ENCODE measurements at regions of chr1 and their contacts with region 1.

Region 1: DNA sequence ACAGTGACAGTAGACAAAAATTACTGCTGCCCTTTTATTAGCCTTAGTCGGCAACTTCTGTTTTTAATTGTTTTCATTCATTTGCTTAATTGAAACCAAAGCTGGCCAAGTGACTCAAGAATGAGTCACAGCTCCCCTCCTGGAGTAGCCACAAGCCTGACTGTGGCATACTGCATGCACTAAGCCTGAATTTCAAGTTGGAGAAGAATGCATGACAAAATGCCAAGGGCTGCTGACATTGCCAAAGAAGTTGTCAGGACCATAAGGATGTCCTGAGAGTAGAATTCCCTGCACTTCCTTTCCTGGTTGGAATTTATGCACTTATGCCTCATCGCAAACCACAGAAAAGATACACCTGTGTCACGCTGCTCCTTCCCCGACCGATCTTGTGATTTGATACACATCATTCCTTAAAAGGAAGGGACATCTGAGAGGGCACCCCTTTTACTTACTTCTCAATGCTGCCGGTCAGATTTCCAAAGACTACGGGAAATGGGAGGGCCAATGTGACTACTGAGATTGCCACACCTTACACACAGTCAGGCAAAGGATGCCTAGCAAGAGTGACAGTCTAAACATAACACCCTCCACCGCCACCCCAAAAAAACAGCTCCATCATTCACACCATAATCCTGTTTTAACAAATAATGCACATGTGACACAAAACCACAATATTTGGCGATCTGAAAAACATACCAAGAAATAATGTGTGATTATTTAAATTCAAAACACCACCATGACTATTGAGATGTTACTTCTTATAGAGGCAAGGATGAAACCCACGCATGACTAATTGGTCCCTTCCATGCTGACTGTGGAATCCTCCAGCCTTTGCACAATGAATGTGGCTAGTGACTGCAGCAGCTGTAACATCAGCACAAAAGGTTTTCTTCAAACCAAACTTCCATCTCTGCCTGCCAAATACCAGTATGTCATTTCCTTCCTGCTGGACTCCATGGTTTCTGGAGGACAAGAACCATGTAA is 28.2 kb downstream of the VAV3 start:
- DNase-seq: peak; percentile 72
- H3K4me3 Mint-ChIP-seq: peak overlapping the region; percentile 49
- H3K27ac Mint-ChIP-seq: peak overlapping the region; percentile 64
- H3K4me1 Mint-ChIP-seq: peaks cover 44% of the 10 kb centered on the region
- H3K27me3 Mint-ChIP-seq: no peaks in the 10 kb centered on the region

Region 2: GRCh38 chr1:107782217-107782845 is 154.5 kb before region 1 on chr1:
- CTCF ChIA-PET with region 1: interaction called, 8 read pairs
- POLR2A ChIA-PET with region 1: no interaction called
- intact Hi-C with region 1: loop called (anchors 1 kb)
- DNase-seq: no peak
- H3K4me3 Mint-ChIP-seq: no peak overlapping the region
- H3K27ac Mint-ChIP-seq: no peak overlapping the region
- H3K4me1 Mint-ChIP-seq: peaks cover 24% of the 10 kb centered on the region
- H3K27me3 Mint-ChIP-seq: no peaks in the 10 kb centered on the region

Region 3: DNA sequence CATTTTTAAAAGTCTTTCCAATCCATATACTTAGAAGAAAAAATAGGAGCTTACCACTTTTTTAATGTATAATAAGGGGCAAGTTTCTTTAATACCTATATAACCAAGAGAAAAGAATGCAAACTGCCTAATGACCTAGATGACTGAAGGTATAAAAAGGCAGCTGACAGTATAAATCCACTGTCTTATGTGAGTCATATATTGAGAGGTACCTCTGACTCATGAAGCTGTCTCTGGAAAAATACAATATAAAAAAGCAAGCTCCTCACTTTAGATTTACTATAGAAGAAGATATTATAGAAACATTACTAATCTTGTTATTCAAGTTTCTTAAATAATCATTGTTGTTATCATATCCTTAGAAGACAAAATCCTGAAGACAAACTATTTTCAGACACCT is 116.0 kb before region 1 on chr1:
- CTCF ChIA-PET with region 1: no interaction called
- POLR2A ChIA-PET with region 1: no interaction called
- intact Hi-C with region 1: loop called (anchors 1 kb)
- DNase-seq: no peak
- H3K4me3 Mint-ChIP-seq: no peak overlapping the region
- H3K27ac Mint-ChIP-seq: no peak overlapping the region
- H3K4me1 Mint-ChIP-seq: peaks cover 19% of the 10 kb centered on the region
- H3K27me3 Mint-ChIP-seq: no peaks in the 10 kb centered on the region

Region 4: DNA sequence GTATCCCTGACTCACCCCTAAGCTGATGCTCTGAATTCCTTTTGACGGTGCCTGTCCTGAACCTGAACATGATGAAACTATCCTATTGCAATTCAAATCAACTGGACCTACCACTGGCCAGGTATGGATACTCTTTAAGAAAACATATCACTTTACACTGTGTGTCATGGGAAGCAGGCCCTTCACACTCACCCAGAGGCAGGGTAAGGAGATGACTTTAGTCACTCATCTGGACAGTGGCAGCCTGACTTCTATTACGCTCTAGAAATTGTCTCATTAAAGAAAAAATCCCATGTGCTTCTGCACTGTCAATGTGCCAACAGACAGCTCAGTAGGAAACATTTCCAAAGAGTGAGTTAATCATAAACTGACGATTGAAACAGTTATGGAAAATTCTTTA is 66.1 kb before region 1 on chr1:
- CTCF ChIA-PET with region 1: no interaction called
- POLR2A ChIA-PET with region 1: no interaction called
- intact Hi-C with region 1: loop called (anchors 1 kb)
- DNase-seq: no peak
- H3K4me3 Mint-ChIP-seq: no peak overlapping the region
- H3K27ac Mint-ChIP-seq: no peak overlapping the region
- H3K4me1 Mint-ChIP-seq: peaks cover 4% of the 10 kb centered on the region
- H3K27me3 Mint-ChIP-seq: no peaks in the 10 kb centered on the region

Region 5: DNA sequence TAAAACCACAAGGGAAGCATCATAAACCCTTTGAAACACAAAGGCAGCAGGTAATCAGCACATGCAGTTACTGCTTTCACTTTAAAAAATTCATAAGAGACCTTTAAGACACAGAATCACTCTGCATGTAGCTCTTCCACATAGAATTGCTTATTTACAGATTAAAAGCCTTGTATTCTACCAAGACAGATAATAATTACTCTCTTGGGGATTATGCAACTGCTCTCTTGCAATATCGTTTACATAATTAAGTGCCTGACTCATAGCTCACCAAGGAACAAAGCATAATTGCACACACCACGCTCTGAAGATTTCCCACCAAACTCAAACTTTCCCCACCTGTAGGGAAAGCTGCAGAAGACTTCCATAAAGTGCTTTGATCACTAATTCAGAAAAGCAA is 59.7 kb before region 1 on chr1:
- CTCF ChIA-PET with region 1: no interaction called
- POLR2A ChIA-PET with region 1: no interaction called
- intact Hi-C with region 1: loop called (anchors 2 kb)
- DNase-seq: no peak
- H3K4me3 Mint-ChIP-seq: no peak overlapping the region
- H3K27ac Mint-ChIP-seq: no peak overlapping the region
- H3K4me1 Mint-ChIP-seq: peaks cover 8% of the 10 kb centered on the region
- H3K27me3 Mint-ChIP-seq: no peaks in the 10 kb centered on the region

Region 6: DNA sequence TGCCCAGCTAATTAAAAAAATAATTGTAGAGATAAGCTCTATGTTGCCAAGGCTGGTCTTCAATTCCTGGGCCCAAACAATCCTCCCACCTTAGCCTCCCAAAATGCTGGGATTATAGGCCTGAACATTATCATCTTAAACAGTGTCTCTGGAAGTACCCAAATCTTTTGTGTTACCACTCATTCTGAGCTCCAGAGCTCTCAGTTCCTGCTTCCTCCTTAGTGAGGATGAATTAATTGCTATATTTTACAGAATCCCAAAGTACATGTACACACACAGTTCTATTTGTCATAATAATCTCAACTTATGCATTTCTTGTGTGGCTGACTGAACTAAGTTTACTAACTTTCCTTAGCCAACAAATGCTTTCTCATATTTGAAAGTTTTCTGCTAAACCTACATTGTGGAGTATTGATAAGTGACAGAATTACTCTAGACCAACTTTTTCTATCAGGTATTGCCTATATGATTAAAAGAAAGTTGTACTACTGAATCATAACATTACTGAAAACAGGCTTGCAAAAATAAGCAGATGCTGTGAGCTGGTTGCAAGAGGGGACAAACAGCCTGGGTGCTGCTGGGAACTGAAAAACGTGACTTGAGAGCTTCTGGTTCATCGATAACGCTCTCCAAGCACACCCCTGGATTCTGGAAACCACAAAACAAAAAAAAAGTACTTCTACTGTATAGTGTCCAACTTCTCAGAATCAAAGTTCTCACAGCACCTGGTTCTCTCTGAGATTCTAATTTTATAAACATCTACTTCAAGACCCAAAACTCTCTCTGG is 12.9 kb after region 1 on chr1:
- CTCF ChIA-PET with region 1: no interaction called
- POLR2A ChIA-PET with region 1: interaction called, 4 read pairs
- intact Hi-C with region 1: loop called (anchors 1 kb)
- DNase-seq: peak; percentile 39
- H3K4me3 Mint-ChIP-seq: no peak overlapping the region
- H3K27ac Mint-ChIP-seq: no peak overlapping the region
- H3K4me1 Mint-ChIP-seq: peaks cover 24% of the 10 kb centered on the region
- H3K27me3 Mint-ChIP-seq: peaks cover 1% of the 10 kb centered on the region

Region 7: GRCh38 chr1:108079440-108080025 is 142.7 kb after region 1 on chr1:
- CTCF ChIA-PET with region 1: no interaction called
- POLR2A ChIA-PET with region 1: no interaction called
- intact Hi-C with region 1: loop called (anchors 1 kb)
- DNase-seq: peak; percentile 70
- H3K4me3 Mint-ChIP-seq: no peak overlapping the region
- H3K27ac Mint-ChIP-seq: peak overlapping the region; percentile 64
- H3K4me1 Mint-ChIP-seq: peaks cover 61% of the 10 kb centered on the region
- H3K27me3 Mint-ChIP-seq: no peaks in the 10 kb centered on the region

Region 8: DNA sequence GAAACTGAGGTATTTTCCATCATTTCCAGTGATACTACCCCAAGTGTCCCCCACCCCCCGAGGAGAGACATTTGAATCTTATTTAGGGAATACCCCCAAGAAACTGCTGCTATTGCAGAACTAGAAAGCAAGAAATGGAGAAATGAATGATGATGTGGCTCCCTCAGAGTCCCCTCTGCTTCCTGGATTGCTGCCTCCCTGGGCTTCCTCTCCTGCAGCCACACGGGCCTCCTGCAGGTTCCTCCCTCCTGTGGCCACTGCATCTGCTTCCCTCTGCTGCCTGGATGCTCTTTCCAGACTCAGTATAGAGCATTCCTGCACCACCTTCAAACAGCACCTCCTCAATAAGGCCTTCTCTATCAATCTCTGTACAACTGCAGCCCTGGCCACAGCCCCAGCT is 194.0 kb after region 1 on chr1:
- CTCF ChIA-PET with region 1: no interaction called
- POLR2A ChIA-PET with region 1: no interaction called
- intact Hi-C with region 1: no loop called
- DNase-seq: no peak
- H3K4me3 Mint-ChIP-seq: no peak overlapping the region
- H3K27ac Mint-ChIP-seq: no peak overlapping the region
- H3K4me1 Mint-ChIP-seq: no peaks in the 10 kb centered on the region
- H3K27me3 Mint-ChIP-seq: no peaks in the 10 kb centered on the region

Measured in activated CD4-positive, alpha-beta memory T cell treated with anti-CD3 and anti-CD28 coated beads for 36 hours (primary cell).